Dendritic cell treated with granulocyte-macrophage colony-stimulating factor and Interleukin-4, amounts not matched to agents 40 ng/mL and 50 ng/mL, for 4 days (primary cell): ENCODE measurements at regions of chr15 and their contacts with region 1.

Region 1: GRCh38 chr15:77186594-77187011 is 115.7 kb upstream of the TSPAN3 start:
- H3K4me3 Mint-ChIP-seq: no peak overlapping the region
- H3K27ac Mint-ChIP-seq: peak overlapping the region; percentile 91
- H3K4me1 Mint-ChIP-seq: peaks cover 50% of the 10 kb centered on the region
- H3K27me3 Mint-ChIP-seq: no peaks in the 10 kb centered on the region

Region 2: DNA sequence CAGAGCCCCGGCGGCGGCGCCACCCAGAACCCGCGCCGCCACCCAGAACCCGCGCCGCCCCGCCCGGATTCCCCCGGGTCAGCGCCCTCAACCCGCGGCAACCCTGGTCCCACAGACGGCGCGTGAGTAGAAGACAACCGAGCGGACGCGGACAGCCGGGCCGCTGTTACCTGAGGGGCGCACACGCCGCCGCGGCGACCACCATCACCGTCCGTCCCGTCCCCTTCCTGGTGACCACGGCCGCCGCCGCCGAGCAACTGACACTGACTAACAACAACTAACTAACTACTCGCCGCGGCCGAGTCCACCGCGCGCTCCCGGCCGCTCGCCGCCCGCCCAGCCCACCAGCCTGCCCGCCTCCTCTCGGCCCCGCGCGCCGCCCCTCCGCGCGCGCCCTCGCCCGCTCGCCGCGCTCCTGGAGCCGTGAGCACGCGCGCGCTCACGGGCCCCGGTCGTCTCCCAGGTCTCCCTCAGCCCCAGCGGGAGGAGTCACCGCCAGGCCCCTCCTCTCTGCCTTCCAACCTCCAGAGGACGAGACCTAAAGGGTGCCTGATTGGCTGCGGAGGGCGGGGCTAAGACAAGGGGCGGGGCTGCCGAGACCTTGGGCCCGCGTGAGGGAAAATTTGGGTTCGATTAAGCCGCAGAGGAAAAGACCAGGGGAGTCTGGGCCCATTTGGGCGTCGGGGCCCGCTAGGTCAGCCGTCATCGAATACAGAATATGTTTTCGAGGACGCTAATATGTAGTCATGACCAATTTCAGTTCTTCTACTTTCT is 233.4 kb after region 1 on chr15 and contains the start of gene PEAK1:
- intact Hi-C with region 1: loop called (anchors 2 kb)
- H3K4me3 Mint-ChIP-seq: peak within 1 kb of the TSS; percentile 92
- H3K27ac Mint-ChIP-seq: peak within 1 kb of the TSS; percentile 96
- H3K4me1 Mint-ChIP-seq: peaks cover 39% of the 10 kb centered on the region
- H3K27me3 Mint-ChIP-seq: peaks cover 3% of the 10 kb centered on the region

Region 3: DNA sequence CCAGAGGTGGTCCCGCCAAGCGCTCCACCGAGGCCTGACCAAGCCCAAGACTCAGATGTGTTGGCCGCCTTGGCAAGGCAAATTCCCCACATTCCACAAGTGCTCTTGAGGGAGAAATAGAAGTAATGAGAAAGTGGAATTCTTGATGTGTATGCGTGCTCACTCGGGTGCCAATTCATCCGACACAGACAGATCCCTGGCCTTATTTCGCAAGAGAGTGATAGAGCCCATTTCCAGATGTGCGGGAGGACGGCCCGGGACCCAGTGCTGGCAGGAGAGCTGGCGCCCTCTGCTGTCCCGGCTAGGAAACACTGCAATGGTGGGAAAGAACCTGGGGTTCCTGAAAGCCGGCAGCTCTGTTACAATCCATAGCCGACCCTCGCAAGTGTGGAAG is 310.1 kb after region 1 on chr15:
- intact Hi-C with region 1: loop called (anchors 2 kb)
- H3K4me3 Mint-ChIP-seq: no peak overlapping the region
- H3K27ac Mint-ChIP-seq: no peak overlapping the region
- H3K4me1 Mint-ChIP-seq: peaks cover 25% of the 10 kb centered on the region
- H3K27me3 Mint-ChIP-seq: peaks cover 7% of the 10 kb centered on the region

Region 4: GRCh38 chr15:77543159-77543882 is 356.7 kb after region 1 on chr15:
- intact Hi-C with region 1: loop called (anchors 2 kb)
- H3K4me3 Mint-ChIP-seq: peak overlapping the region; percentile 77
- H3K27ac Mint-ChIP-seq: peak overlapping the region; percentile 74
- H3K4me1 Mint-ChIP-seq: peaks cover 32% of the 10 kb centered on the region
- H3K27me3 Mint-ChIP-seq: peaks cover 30% of the 10 kb centered on the region